ENCODE measurements at regions of chr6 and their contacts with region 1.

Region 1: GRCh38 chr6:158853072-158853871 is 34.1 kb upstream of the EZR start:
- DNase-seq: peak; percentile 84 to 97
- H3K4me3 ChIP-seq: peak overlapping the region; percentile 23 to 46 (median 32); a peak in 6 of 8 replicates
- H3K27ac ChIP-seq: peak overlapping the region; percentile 96
- H3K4me1 ChIP-seq: peaks cover 12 to 29% (median 25%) of the 10 kb centered on the region in 4 experiments
- H3K27me3 ChIP-seq: no peaks in the 10 kb centered on the region
- CTCF ChIP-seq: no peak
- EP300 ChIP-seq: peak in 1 of 2 experiments; percentile 93; a peak in 2 of 3 replicates
- POLR2A ChIP-seq: peak in 1 of 2 experiments; percentile 55; a peak in 2 of 3 replicates
- RAD21 ChIP-seq: peak; percentile 2 to 25; a peak in 2 of 4 replicates

Region 2: DNA sequence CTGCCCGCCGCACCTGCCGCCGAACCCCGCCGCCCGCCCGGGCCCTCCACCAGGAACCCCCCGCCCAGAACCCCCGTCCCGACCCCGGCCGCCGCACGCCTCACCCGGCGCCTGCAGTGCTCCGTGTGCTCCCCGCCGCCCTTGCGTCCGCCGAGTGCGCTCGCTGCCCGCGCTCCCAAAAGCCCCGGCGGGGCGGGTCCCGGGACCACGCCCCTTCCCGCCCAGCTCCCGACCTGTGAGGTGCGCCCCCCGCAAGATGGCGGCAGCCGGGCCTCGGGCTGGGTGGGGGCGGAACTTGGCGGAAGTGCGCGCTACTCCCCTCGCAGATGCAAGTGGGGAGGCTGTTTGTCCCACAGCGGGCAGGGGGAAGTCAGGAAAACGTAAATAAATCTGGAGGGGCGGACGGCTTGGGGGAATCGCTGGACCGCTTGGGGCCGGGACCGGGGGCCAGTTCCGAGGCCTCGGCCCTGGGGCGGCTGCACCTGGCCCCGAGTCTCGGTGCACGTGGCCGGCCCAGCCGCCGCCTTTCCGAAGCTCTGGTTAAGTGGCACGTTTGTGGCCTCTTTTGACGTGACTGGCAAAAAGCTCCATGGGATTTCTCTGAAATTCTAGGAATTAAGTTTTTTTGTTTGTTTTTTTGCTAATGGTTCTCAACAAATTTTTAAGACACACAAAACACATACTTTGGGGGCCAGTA is 33.9 kb before region 1 on chr6 and contains the start of gene EZR:
- CTCF ChIA-PET with region 1: interaction called, 4 read pairs
- POLR2A ChIA-PET with region 1: interaction called, 34 read pairs
- DNase-seq: peak; percentile 71 to 86
- H3K4me3 ChIP-seq: peak within 1 kb of the TSS; percentile 69 to 88 (median 78)
- H3K27ac ChIP-seq: peak within 1 kb of the TSS; percentile 52; the same call in 1 of the 2 replicates
- H3K4me1 ChIP-seq: peaks cover 6 to 8% (median 8%) of the 10 kb centered on the region in 4 experiments; a peak in 5 of 7 replicates
- H3K27me3 ChIP-seq: peaks cover 0 to 7% (median 5%) of the 10 kb centered on the region in 4 experiments; a peak in 5 of 7 replicates
- CTCF ChIP-seq: no peak
- EP300 ChIP-seq: no peak; a peak in 1 of 3 replicates
- POLR2A ChIP-seq: peak; percentile 83 to 93
- RAD21 ChIP-seq: peak in 1 of 2 experiments; percentile 21; a peak in 1 of 4 replicates
- total RNA-seq, gene EZR: 286 and 287 TPM in 2 replicates

Region 3: DNA sequence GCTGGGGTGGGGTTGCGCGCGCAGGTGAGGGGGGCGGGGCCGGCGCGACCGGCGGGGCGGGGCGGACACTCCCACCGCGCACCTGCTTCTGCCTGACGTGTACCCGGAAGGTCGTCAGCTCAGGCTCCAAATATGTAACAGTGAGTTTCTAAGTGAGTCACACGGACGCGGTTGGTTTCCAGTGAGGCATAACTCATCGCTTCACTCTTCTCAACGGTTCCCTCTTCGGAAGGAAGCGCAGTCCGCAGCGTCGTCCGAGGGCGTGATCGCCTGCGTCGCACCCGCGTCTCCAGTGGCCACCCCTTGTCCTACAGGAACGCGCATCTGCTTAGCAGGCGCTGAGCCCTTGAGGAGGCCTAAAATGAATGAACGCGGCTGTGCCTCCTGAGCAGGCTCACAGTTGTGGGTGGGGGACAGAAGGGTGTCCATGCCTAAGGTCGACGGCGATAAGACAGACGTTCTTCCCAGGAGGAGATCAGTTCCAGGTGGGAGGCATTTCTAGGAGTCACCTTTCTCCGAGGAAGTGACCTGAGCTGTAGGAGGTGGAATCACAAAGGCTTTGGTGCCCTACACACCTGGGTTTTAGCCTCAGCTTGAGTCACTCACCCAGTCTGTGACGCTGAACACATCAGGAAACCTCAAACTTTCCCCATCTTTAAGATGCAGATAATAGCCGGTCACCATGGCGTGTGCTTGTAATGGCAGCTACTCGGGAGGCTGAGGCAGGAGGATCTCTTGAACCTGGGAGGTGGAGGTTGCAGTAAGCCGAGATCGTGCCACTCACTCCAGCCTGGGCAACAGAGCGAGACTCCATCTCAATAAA is 16.8 kb after region 1 on chr6:
- CTCF ChIA-PET with region 1: interaction called, 8 read pairs
- POLR2A ChIA-PET with region 1: interaction called, 93 read pairs
- DNase-seq: peak in 1 of 2 experiments; percentile 56
- H3K4me3 ChIP-seq: peak overlapping the region; percentile 21 to 53 (median 44); a peak in 6 of 8 replicates
- H3K27ac ChIP-seq: peak overlapping the region; percentile 84
- H3K4me1 ChIP-seq: peaks cover 0 to 3% (median 1%) of the 10 kb centered on the region in 4 experiments; a peak in 2 of 7 replicates
- H3K27me3 ChIP-seq: no peaks in the 10 kb centered on the region
- CTCF ChIP-seq: no peak
- EP300 ChIP-seq: no peak
- POLR2A ChIP-seq: no peak; a peak in 2 of 3 replicates
- RAD21 ChIP-seq: peak in 1 of 2 experiments; percentile 2; a peak in 1 of 4 replicates

Region 4: GRCh38 chr6:158910484-158911348 is 57.4 kb after region 1 on chr6:
- CTCF ChIA-PET with region 1: interaction called, 7 read pairs
- POLR2A ChIA-PET with region 1: interaction called, 12 read pairs
- DNase-seq: peak in 1 of 2 experiments; percentile 82
- H3K4me3 ChIP-seq: peak overlapping the region in 2 of 4 experiments; percentile 8 to 41; a peak in 4 of 8 replicates
- H3K27ac ChIP-seq: peak overlapping the region; percentile 74
- H3K4me1 ChIP-seq: peaks cover 3 to 28% (median 11%) of the 10 kb centered on the region in 4 experiments
- H3K27me3 ChIP-seq: no peaks in the 10 kb centered on the region
- CTCF ChIP-seq: peak in 2 of 3 experiments; percentile 13 to 37; a peak in 2 of 4 replicates
- EP300 ChIP-seq: peak in 1 of 2 experiments; percentile 91; a peak in 1 of 3 replicates
- POLR2A ChIP-seq: peak; percentile 49 to 70
- RAD21 ChIP-seq: peak; percentile 29 to 54; a peak in 3 of 4 replicates

Region 5: DNA sequence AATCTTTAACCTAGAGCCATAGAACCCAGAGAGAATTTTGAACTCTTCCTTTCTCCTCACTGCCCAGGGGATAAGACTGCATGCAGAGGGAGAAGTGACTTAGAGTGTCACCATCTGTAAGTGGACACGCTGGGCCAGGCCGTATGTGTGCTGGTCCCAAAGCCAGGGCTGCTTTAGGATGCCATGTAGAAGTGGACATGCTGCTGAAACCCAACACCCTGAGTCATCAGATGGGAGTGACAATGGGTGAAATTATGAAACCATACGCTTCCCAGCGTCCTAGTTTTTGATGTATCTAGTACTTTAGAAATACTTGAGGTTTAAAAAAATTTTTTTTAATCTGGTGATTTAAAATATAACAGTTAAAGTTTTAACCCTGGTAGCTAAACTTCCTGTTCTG is 507.0 kb after region 1 on chr6:
- CTCF ChIA-PET with region 1: no interaction called
- POLR2A ChIA-PET with region 1: no interaction called
- DNase-seq: no peak
- H3K4me3 ChIP-seq: no peak overlapping the region
- H3K27ac ChIP-seq: no peak overlapping the region
- H3K4me1 ChIP-seq: no peaks in the 10 kb centered on the region
- H3K27me3 ChIP-seq: no peaks in the 10 kb centered on the region
- CTCF ChIP-seq: no peak
- EP300 ChIP-seq: no peak
- POLR2A ChIP-seq: no peak
- RAD21 ChIP-seq: no peak